ENCODE measurements at regions of chr14 and their contacts with region 1.

Region 1: GRCh38 chr14:63659726-63660125 is 18.1 kb upstream of the WDR89 start:
- DNase-seq: no peak

Region 2: GRCh38 chr14:63388763-63389431 is 270.8 kb before region 1 on chr14:
- CTCF ChIA-PET with region 1: interaction called, 10 read pairs
- POLR2A ChIA-PET with region 1: no interaction called
- DNase-seq: peak; percentile 67